IMR-90 (cell line): ENCODE measurements at regions of chr11 and their contacts with region 1.

Region 1: DNA sequence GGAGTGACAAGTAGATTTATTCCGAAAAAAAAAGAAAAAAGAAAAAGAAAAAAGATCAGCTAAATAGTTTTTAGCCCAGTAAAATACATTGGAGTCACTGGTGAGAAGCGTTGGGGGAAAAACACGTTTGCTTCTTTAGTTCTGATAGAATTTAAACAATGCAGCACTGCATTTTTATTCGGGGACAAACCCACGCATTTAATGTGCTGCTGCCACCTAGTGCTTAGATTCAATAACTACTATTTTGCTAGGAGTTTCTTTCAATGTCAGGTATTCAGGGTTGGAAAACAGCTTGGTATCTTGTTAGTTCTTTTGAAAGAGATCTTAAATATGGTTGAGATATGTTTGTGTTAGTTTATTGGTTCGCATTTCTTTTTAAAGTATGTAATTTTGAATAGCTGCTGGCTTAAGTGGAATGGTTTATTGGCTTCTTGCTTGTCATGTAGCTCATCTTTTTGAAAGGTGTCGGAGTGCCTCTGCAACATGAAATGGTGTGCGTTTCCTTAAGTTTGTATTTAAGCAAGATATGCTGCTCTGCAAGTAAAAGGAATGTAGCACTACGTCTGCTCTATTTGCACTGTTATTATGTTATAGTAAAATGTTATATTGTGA is 41.9 kb downstream of the SVIP start:
- DNase-seq: peak; percentile 56
- ATAC-seq: peak; percentile 83
- H3K4me3 ChIP-seq: no peak overlapping the region
- H3K27ac ChIP-seq: no peak overlapping the region
- H3K4me1 ChIP-seq: 0 out of 2 replicates have a peak, but pooled peaks cover 3% of the 10 kb centered on the region
- H3K27me3 ChIP-seq: no peaks in the 10 kb centered on the region
- CTCF ChIP-seq: peak; percentile 73
- POLR2A ChIP-seq: no peak
- RAD21 ChIP-seq: peak; percentile 76

Region 2: DNA sequence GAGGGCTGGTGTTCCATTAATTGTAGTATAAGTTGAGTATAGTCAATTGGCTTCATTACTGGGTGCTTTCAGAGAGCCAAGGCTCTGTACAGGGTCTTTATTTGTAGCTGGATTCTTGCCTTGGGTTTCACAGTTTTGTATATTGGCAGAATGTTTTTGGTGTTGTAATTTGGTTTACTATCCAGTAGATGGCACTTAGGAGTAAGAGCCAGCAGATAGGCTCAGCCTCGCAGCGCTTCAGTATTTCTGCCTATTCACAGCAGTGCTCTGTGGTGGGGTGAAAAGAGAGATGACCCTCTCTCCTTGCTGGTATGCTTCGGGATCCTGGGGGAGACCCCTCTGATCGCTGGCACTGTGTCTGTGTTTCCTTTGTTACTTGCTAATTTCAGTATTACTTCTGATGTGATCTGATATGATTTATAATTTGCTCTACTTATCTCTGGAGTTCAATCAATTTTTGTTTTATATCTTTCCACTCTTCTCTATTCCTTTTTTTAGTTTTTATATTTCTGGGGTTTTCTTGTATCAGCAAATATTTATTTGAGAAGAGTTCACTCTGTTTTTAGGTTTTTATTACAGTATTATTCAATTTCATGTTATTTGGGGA is 542.6 kb before region 1 on chr11:
- CTCF ChIA-PET with region 1: no interaction called
- POLR2A ChIA-PET with region 1: no interaction called
- dilution Hi-C with region 1: no loop called
- in situ Hi-C with region 1: no loop called
- intact Hi-C with region 1: loop called (anchors 1 kb)
- DNase-seq: peak; percentile 19
- ATAC-seq: peak; percentile 80
- H3K4me3 ChIP-seq: no peak overlapping the region
- H3K27ac ChIP-seq: no peak overlapping the region
- H3K4me1 ChIP-seq: no peaks in the 10 kb centered on the region
- H3K27me3 ChIP-seq: no peaks in the 10 kb centered on the region
- CTCF ChIP-seq: peak; percentile 60
- POLR2A ChIP-seq: no peak
- RAD21 ChIP-seq: peak; percentile 45

Region 3: GRCh38 chr11:22337596-22338485 is 449.8 kb before region 1 on chr11 and contains the start of gene SLC17A6:
- CTCF ChIA-PET with region 1: interaction called, 3 read pairs
- POLR2A ChIA-PET with region 1: no interaction called
- dilution Hi-C with region 1: no loop called
- in situ Hi-C with region 1: loop called (anchors 10 kb)
- intact Hi-C with region 1: loop called (anchors 1 kb)
- DNase-seq: peak; percentile 8
- ATAC-seq: no peak
- H3K4me3 ChIP-seq: no peak within 1 kb of the TSS
- H3K27ac ChIP-seq: no peak within 1 kb of the TSS
- H3K4me1 ChIP-seq: no peaks in the 10 kb centered on the region
- H3K27me3 ChIP-seq: peaks cover 26% of the 10 kb centered on the region
- CTCF ChIP-seq: no peak
- POLR2A ChIP-seq: no peak
- RAD21 ChIP-seq: no peak
- total RNA-seq, gene SLC17A6: not detected in 2 replicates

Region 4: GRCh38 chr11:22426915-22427314 is 360.7 kb before region 1 on chr11:
- CTCF ChIA-PET with region 1: no interaction called
- POLR2A ChIA-PET with region 1: no interaction called
- dilution Hi-C with region 1: no loop called
- in situ Hi-C with region 1: no loop called
- intact Hi-C with region 1: loop called (anchors 2 kb)
- DNase-seq: peak; percentile 7
- ATAC-seq: no peak
- H3K4me3 ChIP-seq: no peak overlapping the region
- H3K27ac ChIP-seq: no peak overlapping the region
- H3K4me1 ChIP-seq: no peaks in the 10 kb centered on the region
- H3K27me3 ChIP-seq: no peaks in the 10 kb centered on the region
- CTCF ChIP-seq: peak; percentile 45
- POLR2A ChIP-seq: no peak
- RAD21 ChIP-seq: peak; percentile 46

Region 5: GRCh38 chr11:22602504-22602903 is 185.2 kb before region 1 on chr11:
- CTCF ChIA-PET with region 1: no interaction called
- POLR2A ChIA-PET with region 1: no interaction called
- dilution Hi-C with region 1: no loop called
- in situ Hi-C with region 1: no loop called
- intact Hi-C with region 1: no loop called
- DNase-seq: no peak
- ATAC-seq: no peak
- H3K4me3 ChIP-seq: no peak overlapping the region
- H3K27ac ChIP-seq: no peak overlapping the region
- H3K4me1 ChIP-seq: no peaks in the 10 kb centered on the region
- H3K27me3 ChIP-seq: no peaks in the 10 kb centered on the region
- CTCF ChIP-seq: no peak
- POLR2A ChIP-seq: no peak
- RAD21 ChIP-seq: no peak

Region 6: GRCh38 chr11:22670830-22671229 is 116.8 kb before region 1 on chr11:
- CTCF ChIA-PET with region 1: no interaction called
- POLR2A ChIA-PET with region 1: interaction called, 8 read pairs
- dilution Hi-C with region 1: no loop called
- in situ Hi-C with region 1: no loop called
- intact Hi-C with region 1: loop called (anchors 2 kb)
- DNase-seq: peak; percentile 3
- ATAC-seq: no peak
- H3K4me3 ChIP-seq: no peak overlapping the region
- H3K27ac ChIP-seq: no peak overlapping the region
- H3K4me1 ChIP-seq: no peaks in the 10 kb centered on the region
- H3K27me3 ChIP-seq: peaks cover 21% of the 10 kb centered on the region
- CTCF ChIP-seq: peak; percentile 29; the same call in 1 of the 2 replicates
- POLR2A ChIP-seq: no peak
- RAD21 ChIP-seq: peak; percentile 15; the same call in 1 of the 2 replicates